IMR-90 (cell line): ENCODE measurements at regions of chr19 and their contacts with region 1.

Region 1: DNA sequence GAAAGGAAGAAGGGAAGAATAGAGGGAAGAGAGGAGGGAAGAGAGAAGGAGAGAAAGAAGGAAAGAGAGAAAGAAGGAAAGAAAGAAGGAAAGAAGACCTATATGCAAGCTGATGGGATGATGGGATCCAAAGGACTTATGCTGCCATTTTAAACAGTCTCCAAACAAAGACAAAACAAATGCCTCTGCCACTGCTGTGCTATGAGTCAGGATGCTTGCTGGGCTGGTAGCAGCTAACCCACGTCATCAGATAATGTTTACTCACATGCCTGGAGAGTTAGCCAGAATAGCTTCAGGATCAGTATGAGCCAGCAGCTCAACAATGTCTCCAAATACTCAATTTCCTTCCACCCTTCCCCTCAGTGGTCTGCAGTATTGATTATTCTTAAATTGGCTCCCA is 12.0 kb upstream of the ZNF274 start:
- DNase-seq: peak; percentile 42
- ATAC-seq: no peak
- H3K4me3 ChIP-seq: no peak overlapping the region
- H3K27ac ChIP-seq: no peak overlapping the region
- H3K4me1 ChIP-seq: no peaks in the 10 kb centered on the region
- H3K27me3 ChIP-seq: no peaks in the 10 kb centered on the region
- CTCF ChIP-seq: no peak
- POLR2A ChIP-seq: no peak
- RAD21 ChIP-seq: no peak

Region 2: GRCh38 chr19:57820599-57820998 is 350.3 kb before region 1 on chr19:
- CTCF ChIA-PET with region 1: no interaction called
- POLR2A ChIA-PET with region 1: interaction called, 17 read pairs
- dilution Hi-C with region 1: no loop called
- in situ Hi-C with region 1: no loop called
- intact Hi-C with region 1: no loop called
- DNase-seq: no peak
- ATAC-seq: no peak
- H3K4me3 ChIP-seq: peak overlapping the region; percentile 89
- H3K27ac ChIP-seq: no peak overlapping the region; the same call in 1 of the 2 replicates
- H3K4me1 ChIP-seq: peaks cover 4% of the 10 kb centered on the region
- H3K27me3 ChIP-seq: no peaks in the 10 kb centered on the region
- CTCF ChIP-seq: no peak
- POLR2A ChIP-seq: no peak
- RAD21 ChIP-seq: no peak

Region 3: DNA sequence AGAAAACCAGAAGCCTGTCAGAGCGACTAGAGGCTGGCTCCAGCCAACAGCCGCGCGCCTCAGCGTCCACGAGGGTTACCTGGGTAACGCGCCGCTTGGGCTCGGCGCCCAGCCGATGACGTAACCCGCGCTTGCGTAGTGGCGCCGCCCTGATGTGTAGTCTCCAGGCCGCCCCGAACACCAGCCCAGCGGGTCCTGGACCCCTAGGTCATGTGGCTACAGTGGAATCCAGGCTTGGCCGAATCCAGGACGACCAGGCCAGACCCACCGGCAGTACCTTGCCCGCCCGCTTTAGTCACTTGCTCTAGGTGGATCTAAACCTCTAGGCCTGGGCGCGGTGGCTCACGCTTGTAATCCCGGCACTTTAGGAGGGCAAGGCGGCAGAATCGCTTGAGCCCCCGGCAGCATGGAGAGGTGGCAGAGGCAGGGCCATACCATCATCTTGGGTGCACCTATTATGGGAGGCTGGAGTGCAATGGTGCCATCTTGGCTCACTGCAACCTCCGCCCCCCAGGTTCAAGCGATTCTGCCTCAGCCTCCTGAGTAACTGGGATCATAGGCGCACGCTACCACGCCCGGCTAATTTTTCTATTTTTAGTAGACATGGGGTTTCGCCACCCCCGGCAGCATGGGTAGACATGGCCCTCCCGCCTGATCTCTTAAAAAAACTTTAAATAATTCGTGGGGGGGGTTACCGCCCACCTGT is 161.0 kb before region 1 on chr19:
- CTCF ChIA-PET with region 1: no interaction called
- POLR2A ChIA-PET with region 1: no interaction called
- dilution Hi-C with region 1: no loop called
- in situ Hi-C with region 1: no loop called
- intact Hi-C with region 1: no loop called
- DNase-seq: peak; percentile 63
- ATAC-seq: peak; percentile 93
- H3K4me3 ChIP-seq: peak overlapping the region; percentile 58
- H3K27ac ChIP-seq: peak overlapping the region; percentile 40
- H3K4me1 ChIP-seq: no peaks in the 10 kb centered on the region
- H3K27me3 ChIP-seq: no peaks in the 10 kb centered on the region
- CTCF ChIP-seq: no peak
- POLR2A ChIP-seq: no peak
- RAD21 ChIP-seq: no peak

Region 4: DNA sequence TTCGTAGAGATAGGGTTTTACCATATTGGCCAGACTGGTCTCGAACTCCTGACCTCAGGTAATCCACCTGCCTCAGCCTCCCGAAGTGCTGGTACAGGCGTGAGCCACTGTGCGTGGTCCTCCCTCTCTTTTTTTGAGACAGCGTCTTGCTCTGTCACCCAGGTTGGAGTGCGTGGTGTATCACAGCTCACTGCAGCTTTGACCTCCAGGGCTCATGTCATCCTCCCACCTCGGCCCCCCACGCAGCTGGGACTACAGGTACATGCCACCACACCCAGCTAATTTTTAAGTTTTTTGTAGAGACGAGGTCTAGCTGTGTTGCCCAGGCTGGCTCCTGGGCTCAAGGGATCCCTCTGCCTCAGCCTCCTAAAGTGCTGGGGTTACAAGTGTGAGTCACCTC is 91.1 kb before region 1 on chr19:
- CTCF ChIA-PET with region 1: no interaction called
- POLR2A ChIA-PET with region 1: no interaction called
- dilution Hi-C with region 1: no loop called
- in situ Hi-C with region 1: no loop called
- intact Hi-C with region 1: no loop called
- DNase-seq: no peak
- ATAC-seq: no peak
- H3K4me3 ChIP-seq: no peak overlapping the region
- H3K27ac ChIP-seq: no peak overlapping the region
- H3K4me1 ChIP-seq: no peaks in the 10 kb centered on the region
- H3K27me3 ChIP-seq: no peaks in the 10 kb centered on the region
- CTCF ChIP-seq: no peak
- POLR2A ChIP-seq: no peak
- RAD21 ChIP-seq: no peak

Region 5: DNA sequence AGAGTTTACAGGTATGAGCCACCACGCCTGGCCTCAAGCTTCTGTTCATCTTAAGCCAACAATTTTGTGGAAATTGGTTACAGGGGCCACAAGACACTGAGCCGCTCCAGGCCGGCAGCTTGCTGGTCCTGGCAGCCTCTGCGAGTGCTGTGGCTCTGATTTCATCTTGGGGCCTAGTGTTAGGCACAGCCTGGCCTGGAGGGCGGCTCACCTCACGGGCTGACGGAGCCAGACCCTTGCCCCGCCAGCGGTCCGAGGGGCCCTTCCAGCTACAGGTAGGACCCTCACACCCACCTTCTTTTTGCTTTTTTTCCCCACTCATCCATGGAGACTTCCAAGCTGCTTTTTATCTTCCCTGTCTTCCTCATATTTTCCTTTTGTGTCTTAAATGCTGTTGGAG is 66.5 kb after region 1 on chr19:
- CTCF ChIA-PET with region 1: no interaction called
- POLR2A ChIA-PET with region 1: no interaction called
- dilution Hi-C with region 1: no loop called
- in situ Hi-C with region 1: no loop called
- intact Hi-C with region 1: no loop called
- DNase-seq: no peak
- ATAC-seq: no peak
- H3K4me3 ChIP-seq: no peak overlapping the region
- H3K27ac ChIP-seq: no peak overlapping the region
- H3K4me1 ChIP-seq: no peaks in the 10 kb centered on the region
- H3K27me3 ChIP-seq: no peaks in the 10 kb centered on the region
- CTCF ChIP-seq: no peak
- POLR2A ChIP-seq: no peak
- RAD21 ChIP-seq: no peak